ENCODE measurements at regions of chr15 and their contacts with region 1.

Region 1: GRCh38 chr15:95843241-95843910 is 487.1 kb upstream of the NR2F2 start:
- DNase-seq: peak; percentile 24 to 53
- ATAC-seq: peak; percentile 64 to 88 (median 80)
- H3K4me3 ChIP-seq: no peak overlapping the region
- H3K27ac ChIP-seq: peak overlapping the region in 8 of 10 donors; percentile 12 to 70 (median 54)
- H3K4me1 ChIP-seq: peaks cover 0 to 21% (median 6%) of the 10 kb centered on the region in 9 donors
- H3K27me3 ChIP-seq: no peaks in the 10 kb centered on the region
- CTCF ChIP-seq: no peak

Region 2: DNA sequence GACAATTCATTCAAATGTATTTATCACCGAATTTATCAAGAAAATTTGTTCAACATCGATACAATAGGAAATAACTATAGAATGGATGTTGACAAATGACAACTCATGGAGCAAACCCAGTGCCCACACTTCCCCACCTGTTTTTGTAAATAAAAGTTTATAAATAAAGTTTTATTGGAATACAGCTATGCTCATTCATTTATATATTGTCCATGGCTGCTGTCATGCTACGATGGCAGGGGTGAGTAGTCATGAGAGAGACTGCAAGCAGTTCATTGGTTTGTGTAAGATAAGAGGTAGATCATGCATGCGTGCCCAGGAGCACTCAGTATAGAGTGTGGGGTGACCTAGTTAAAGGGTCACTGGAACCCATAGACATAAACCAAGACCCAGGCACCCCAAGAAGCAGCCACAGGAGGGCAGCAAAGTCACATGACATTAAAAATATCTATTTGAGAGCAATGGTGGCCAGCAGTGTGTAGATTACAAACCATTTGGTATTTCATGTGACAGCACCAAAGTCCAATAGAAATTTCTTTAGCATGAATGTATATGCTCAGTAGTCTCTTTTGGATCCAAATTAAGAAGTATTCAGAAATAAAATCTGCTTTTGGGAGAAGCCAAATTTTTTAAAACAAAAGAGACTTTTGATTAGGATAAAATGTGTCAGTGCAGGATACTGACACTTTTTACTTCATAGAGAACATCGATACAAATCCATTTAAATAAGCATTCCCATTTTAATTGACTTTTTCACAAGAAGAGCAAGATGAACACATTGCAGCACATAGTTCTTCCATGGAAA is 817.2 kb before region 1 on chr15:
- intact Hi-C with region 1: loop called in 1 of 10 experiments (anchors 10 kb)
- DNase-seq: peak; percentile 32 to 54
- ATAC-seq: peak in 4 of 8 donors; percentile 31 to 53 (median 41)
- H3K4me3 ChIP-seq: no peak overlapping the region
- H3K27ac ChIP-seq: no peak overlapping the region
- H3K4me1 ChIP-seq: no peaks in the 10 kb centered on the region
- H3K27me3 ChIP-seq: no peaks in the 10 kb centered on the region
- CTCF ChIP-seq: peak in 8 of 9 donors; percentile 44 to 66 (median 56)

Region 3: GRCh38 chr15:95277266-95277665 is 566.1 kb before region 1 on chr15:
- intact Hi-C with region 1: loop called in 1 of 10 experiments (anchors 10 kb)
- DNase-seq: no peak
- ATAC-seq: no peak
- H3K4me3 ChIP-seq: no peak overlapping the region
- H3K27ac ChIP-seq: peak overlapping the region in 7 of 10 donors; percentile 2 to 57 (median 31)
- H3K4me1 ChIP-seq: peaks cover 0 to 20% (median 0%) of the 10 kb centered on the region in 9 donors
- H3K27me3 ChIP-seq: peaks cover 0 to 4% (median 0%) of the 10 kb centered on the region in 7 donors
- CTCF ChIP-seq: no peak

Region 4: DNA sequence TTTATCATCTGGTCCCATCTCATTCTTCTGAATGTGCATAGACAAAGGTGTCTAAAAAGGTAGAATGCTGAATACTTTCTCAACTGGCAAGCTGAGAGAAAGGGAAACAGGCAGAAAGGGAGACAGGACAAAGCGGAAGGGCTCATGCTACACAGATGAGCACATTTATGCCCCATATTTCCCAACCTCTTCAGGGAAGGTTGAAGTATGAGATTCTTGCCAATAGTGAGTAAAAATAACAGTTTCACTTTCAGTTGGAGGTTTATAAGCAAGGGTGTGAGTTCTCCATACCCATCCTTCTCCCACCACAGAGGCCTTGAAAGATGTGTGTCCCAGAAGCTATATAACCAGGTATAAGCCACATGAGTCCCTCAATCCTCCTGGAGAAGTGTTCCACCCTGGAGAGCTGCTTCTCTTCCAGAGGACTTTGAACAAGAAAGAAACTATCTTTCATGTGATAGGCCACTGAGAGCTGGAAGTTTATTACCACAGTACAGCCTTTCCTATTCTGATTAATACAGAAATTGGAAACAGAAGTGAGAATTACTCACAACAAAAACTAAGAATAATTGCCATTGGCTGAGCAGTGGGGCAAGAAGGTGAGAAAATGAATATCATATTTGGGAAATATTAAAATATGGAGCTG is 222.3 kb before region 1 on chr15:
- intact Hi-C with region 1: loop called in 1 of 10 experiments (anchors 10 kb)
- DNase-seq: no peak
- ATAC-seq: peak in 2 of 8 donors; percentile 31 to 35
- H3K4me3 ChIP-seq: no peak overlapping the region
- H3K27ac ChIP-seq: peak overlapping the region in 3 of 10 donors; percentile 11 to 54 (median 46)
- H3K4me1 ChIP-seq: peaks cover 0 to 11% (median 0%) of the 10 kb centered on the region in 9 donors
- H3K27me3 ChIP-seq: no peaks in the 10 kb centered on the region
- CTCF ChIP-seq: no peak

Region 5: GRCh38 chr15:96345560-96346399 is 502.4 kb after region 1 on chr15:
- intact Hi-C with region 1: loop called in 1 of 10 experiments (anchors 10 kb)
- DNase-seq: peak; percentile 69 to 82
- ATAC-seq: peak; percentile 58 to 85 (median 70)
- H3K4me3 ChIP-seq: peak overlapping the region; percentile 2 to 81 (median 56)
- H3K27ac ChIP-seq: peak overlapping the region; percentile 59 to 94 (median 90)
- H3K4me1 ChIP-seq: peaks cover 0 to 83% (median 36%) of the 10 kb centered on the region in 9 donors
- H3K27me3 ChIP-seq: peaks cover 4 to 100% (median 77%) of the 10 kb centered on the region in 7 donors
- CTCF ChIP-seq: peak; percentile 40 to 83 (median 65)

Measured in heart right ventricle (tissue), 16 donors.